Activated CD8-positive, alpha-beta T cell treated with anti-CD3 and anti-CD28 coated beads, Interleukin-2, amount 10 ng/mL, durations not matched to agents 7 days and 5 days (primary cell): ENCODE measurements at regions of chr22 and their contacts with region 1.

Region 1: GRCh38 chr22:35660291-35661127 is 12.3 kb downstream of the APOL6 start:
- DNase-seq: peak; percentile 67
- ATAC-seq: peak; percentile 78
- H3K4me3 Mint-ChIP-seq: peak overlapping the region; percentile 30
- H3K27ac Mint-ChIP-seq: peak overlapping the region; percentile 84
- H3K4me1 Mint-ChIP-seq: peaks cover 63% of the 10 kb centered on the region
- H3K27me3 Mint-ChIP-seq: no peaks in the 10 kb centered on the region

Region 2: DNA sequence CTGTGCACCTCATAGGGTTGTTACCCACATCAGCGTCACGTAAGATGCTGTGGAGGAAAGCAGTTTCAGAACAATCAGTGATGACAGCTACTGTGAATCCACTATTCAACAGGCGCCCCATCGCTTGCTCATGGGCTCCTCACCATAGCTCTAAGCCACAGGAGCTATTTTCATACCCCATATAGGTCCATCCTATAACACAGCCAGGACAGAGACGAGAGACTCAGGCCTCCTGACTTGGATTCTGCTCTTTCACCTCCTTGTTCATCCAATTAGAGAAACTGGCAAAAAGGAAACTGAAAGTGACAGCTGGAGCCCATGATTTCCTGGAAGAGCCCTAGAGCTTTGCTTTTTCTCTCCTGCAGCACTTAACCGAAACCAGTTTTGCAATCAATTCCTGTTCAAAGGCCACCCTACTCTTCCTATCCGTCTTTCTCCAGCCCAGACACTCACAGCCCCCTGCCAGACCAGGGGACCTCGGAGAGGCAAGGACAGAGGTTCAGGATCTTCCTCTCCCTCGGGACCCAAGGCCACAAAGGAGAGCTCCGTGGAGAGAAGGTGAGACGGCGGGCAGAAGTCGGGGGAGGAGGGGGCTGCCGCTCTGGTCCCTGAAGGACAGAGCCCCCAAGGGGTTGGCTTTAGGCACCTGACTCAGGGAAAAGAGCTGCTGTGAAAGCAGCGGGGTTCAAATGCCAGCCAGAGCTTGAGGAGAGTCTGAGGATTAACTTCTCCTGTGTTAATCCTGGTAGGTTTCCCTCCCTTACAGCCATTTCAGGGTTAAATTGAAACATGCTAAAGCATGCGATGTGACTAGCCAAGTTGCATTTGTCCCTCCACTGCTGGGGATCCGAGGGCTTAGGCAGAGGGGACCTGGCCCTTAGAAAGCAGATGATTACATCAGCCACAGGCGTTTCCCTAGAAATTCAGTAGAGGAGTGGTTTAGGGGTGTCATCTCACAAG is 12.2 kb before region 1 on chr22 and contains the start of gene APOL6:
- CTCF ChIA-PET with region 1: interaction called, 7 read pairs
- POLR2A ChIA-PET with region 1: interaction called, 19 read pairs
- DNase-seq: peak; percentile 82
- ATAC-seq: peak; percentile 76
- H3K4me3 Mint-ChIP-seq: peak within 1 kb of the TSS; percentile 99
- H3K27ac Mint-ChIP-seq: peak within 1 kb of the TSS; percentile 99
- H3K4me1 Mint-ChIP-seq: peaks cover 37% of the 10 kb centered on the region
- H3K27me3 Mint-ChIP-seq: no peaks in the 10 kb centered on the region
- total RNA-seq, gene APOL6: 62.3 to 63.2 TPM

Region 3: GRCh38 chr22:35674335-35674734 is 13.8 kb after region 1 on chr22:
- CTCF ChIA-PET with region 1: no interaction called
- POLR2A ChIA-PET with region 1: no interaction called
- DNase-seq: no peak
- ATAC-seq: no peak
- H3K4me3 Mint-ChIP-seq: no peak overlapping the region
- H3K27ac Mint-ChIP-seq: no peak overlapping the region
- H3K4me1 Mint-ChIP-seq: no peaks in the 10 kb centered on the region
- H3K27me3 Mint-ChIP-seq: no peaks in the 10 kb centered on the region

Region 4: GRCh38 chr22:35947794-35948425 is 287.4 kb after region 1 on chr22:
- CTCF ChIA-PET with region 1: no interaction called
- POLR2A ChIA-PET with region 1: no interaction called
- DNase-seq: no peak
- ATAC-seq: no peak
- H3K4me3 Mint-ChIP-seq: no peak overlapping the region
- H3K27ac Mint-ChIP-seq: no peak overlapping the region
- H3K4me1 Mint-ChIP-seq: no peaks in the 10 kb centered on the region
- H3K27me3 Mint-ChIP-seq: peaks cover 10% of the 10 kb centered on the region